Panc1 (cell line): ENCODE measurements at regions of chr6 and their contacts with region 1.

Region 1: DNA sequence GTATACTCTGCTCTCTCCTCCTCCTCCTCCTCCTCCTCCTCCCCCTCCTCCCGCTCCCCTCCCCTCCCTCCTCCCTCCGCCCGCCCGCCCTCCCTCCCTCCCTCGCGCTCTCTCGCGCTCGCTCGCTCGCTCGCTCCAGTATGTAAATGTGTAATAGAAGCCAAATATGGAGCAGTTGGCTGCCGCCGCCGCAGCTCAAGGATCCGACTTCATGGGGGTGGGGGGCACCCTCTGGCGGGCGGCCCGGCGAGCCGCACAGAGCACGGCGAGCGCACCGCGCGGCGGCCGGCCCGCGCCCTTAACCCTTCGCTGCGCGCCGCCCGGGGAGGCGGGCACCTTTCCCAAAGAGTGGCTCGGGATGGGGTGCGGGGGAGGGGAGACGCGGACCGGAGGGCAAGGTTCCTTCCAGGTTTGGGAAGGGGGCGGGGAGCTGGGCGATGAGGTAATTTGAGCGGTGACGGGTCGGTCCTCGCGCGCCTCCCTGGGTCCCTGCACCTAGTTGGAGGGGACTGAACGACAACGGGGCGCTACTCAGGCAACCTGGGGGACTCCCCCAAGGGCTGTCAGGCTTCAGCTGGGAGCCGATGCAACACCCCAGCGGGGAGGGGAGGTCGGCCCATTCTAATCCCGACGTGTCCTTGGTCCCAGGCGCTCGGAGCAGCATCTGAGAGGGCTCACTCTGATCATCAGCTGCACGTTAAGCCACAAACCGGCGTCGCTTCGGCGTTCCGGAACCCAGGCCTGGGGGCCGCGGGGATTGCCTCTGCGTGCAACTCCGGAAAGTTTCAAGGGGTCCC is 409 bp upstream of the ATXN1 start:
- DNase-seq: no peak
- ATAC-seq: peak; percentile 72
- H3K4me3 ChIP-seq: peak overlapping the region; percentile 94 to 95
- H3K27ac ChIP-seq: peak overlapping the region; percentile 94
- H3K4me1 ChIP-seq: peaks cover 55% of the 10 kb centered on the region
- H3K27me3 ChIP-seq: no peaks in the 10 kb centered on the region
- CTCF ChIP-seq: peak; percentile 56

Region 2: DNA sequence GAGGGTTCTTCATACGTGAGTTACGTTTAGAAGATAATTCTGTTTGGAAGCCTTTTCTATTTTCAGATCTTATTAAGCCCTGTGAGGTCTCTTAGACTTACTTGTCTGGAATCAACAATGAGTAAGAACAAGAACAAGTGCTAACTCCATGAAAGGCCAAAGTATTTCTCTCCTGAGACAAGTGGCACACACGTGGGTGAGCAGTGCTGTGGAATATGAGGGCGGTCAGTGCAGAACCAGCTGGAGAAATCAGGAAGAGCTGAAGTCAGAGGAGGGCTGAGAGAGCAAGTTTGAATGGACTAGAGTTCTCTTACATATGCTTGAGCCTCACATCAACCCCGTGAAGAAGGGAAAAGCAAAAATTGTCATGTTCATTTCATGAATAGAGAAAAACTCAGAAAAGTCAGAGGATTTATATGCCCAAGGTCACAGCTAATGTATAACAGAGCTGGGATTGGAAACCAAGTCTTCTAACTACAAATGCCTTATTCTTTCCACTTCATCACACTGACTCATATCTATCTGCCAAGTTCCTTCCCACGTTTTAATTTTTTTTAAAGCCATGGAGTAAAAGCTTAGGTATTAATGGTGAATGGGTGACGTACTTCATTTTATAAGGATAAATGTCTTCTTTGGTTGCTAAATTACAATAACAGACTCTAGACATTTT is 897.5 kb before region 1 on chr6:
- CTCF ChIA-PET with region 1: no interaction called
- POLR2A ChIA-PET with region 1: no interaction called
- in situ Hi-C with region 1: no loop called
- intact Hi-C with region 1: no loop called
- DNase-seq: no peak
- ATAC-seq: no peak
- H3K4me3 ChIP-seq: no peak overlapping the region
- H3K27ac ChIP-seq: no peak overlapping the region
- H3K4me1 ChIP-seq: no peaks in the 10 kb centered on the region
- H3K27me3 ChIP-seq: no peaks in the 10 kb centered on the region
- CTCF ChIP-seq: no peak

Region 3: DNA sequence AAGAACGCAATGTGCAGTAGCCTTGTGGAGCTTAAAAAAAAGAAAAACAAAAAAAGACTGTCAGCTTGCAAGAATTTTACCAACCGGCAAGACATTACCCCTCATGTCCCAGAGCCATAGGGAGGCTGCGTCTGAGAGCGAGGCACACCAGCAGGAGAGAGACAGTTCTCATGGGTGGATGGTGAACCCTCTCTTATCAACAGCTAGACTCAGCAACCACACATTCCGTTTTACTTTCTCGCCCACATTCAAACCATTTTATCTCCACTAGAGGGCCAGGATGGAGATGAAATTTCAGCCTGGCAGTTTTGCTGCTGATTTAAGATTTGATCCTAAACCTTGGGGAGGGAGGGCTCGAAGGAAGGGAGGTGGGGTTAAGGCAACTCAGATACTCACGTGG is 247.4 kb before region 1 on chr6:
- CTCF ChIA-PET with region 1: interaction called, 3 read pairs
- POLR2A ChIA-PET with region 1: no interaction called
- in situ Hi-C with region 1: no loop called
- intact Hi-C with region 1: loop called (anchors 10 kb)
- DNase-seq: peak; percentile 10
- ATAC-seq: peak; percentile 71
- H3K4me3 ChIP-seq: no peak overlapping the region
- H3K27ac ChIP-seq: no peak overlapping the region
- H3K4me1 ChIP-seq: 0 out of 2 replicates have a peak, but pooled peaks cover 3% of the 10 kb centered on the region
- H3K27me3 ChIP-seq: no peaks in the 10 kb centered on the region
- CTCF ChIP-seq: peak; percentile 69

Region 4: GRCh38 chr6:16712931-16713484 is 48.7 kb before region 1 on chr6:
- CTCF ChIA-PET with region 1: interaction called, 12 read pairs
- POLR2A ChIA-PET with region 1: interaction called, 12 read pairs
- in situ Hi-C with region 1: no loop called
- intact Hi-C with region 1: loop called (anchors 2 kb)
- DNase-seq: peak; percentile 95
- ATAC-seq: peak; percentile 79
- H3K4me3 ChIP-seq: peak overlapping the region; percentile 22 to 39
- H3K27ac ChIP-seq: peak overlapping the region; percentile 99
- H3K4me1 ChIP-seq: peaks cover 92% of the 10 kb centered on the region
- H3K27me3 ChIP-seq: no peaks in the 10 kb centered on the region
- CTCF ChIP-seq: peak; percentile 47

Region 5: GRCh38 chr6:16741112-16742016 is 20.3 kb before region 1 on chr6:
- CTCF ChIA-PET with region 1: interaction called, 5 read pairs
- POLR2A ChIA-PET with region 1: interaction called, 16 read pairs
- in situ Hi-C with region 1: no loop called
- intact Hi-C with region 1: no loop called
- DNase-seq: no peak
- ATAC-seq: peak; percentile 73; the same call in 1 of the 2 replicates
- H3K4me3 ChIP-seq: no peak overlapping the region
- H3K27ac ChIP-seq: peak overlapping the region; percentile 80
- H3K4me1 ChIP-seq: peaks cover 70% of the 10 kb centered on the region
- H3K27me3 ChIP-seq: no peaks in the 10 kb centered on the region
- CTCF ChIP-seq: no peak

Region 6: GRCh38 chr6:16964553-16965501 is 203.2 kb after region 1 on chr6:
- CTCF ChIA-PET with region 1: no interaction called
- POLR2A ChIA-PET with region 1: no interaction called
- in situ Hi-C with region 1: no loop called
- intact Hi-C with region 1: loop called (anchors 5 kb)
- DNase-seq: peak; percentile 48
- ATAC-seq: peak; percentile 98
- H3K4me3 ChIP-seq: peak overlapping the region in 1 of 2 experiments; percentile 21; a peak in 2 of 4 replicates
- H3K27ac ChIP-seq: no peak overlapping the region
- H3K4me1 ChIP-seq: no peaks in the 10 kb centered on the region
- H3K27me3 ChIP-seq: 0 out of 2 replicates have a peak, but pooled peaks cover 3% of the 10 kb centered on the region
- CTCF ChIP-seq: peak; percentile 95